K562 (cell line): ENCODE measurements at regions of chr1 and their contacts with region 1.

Region 1: DNA sequence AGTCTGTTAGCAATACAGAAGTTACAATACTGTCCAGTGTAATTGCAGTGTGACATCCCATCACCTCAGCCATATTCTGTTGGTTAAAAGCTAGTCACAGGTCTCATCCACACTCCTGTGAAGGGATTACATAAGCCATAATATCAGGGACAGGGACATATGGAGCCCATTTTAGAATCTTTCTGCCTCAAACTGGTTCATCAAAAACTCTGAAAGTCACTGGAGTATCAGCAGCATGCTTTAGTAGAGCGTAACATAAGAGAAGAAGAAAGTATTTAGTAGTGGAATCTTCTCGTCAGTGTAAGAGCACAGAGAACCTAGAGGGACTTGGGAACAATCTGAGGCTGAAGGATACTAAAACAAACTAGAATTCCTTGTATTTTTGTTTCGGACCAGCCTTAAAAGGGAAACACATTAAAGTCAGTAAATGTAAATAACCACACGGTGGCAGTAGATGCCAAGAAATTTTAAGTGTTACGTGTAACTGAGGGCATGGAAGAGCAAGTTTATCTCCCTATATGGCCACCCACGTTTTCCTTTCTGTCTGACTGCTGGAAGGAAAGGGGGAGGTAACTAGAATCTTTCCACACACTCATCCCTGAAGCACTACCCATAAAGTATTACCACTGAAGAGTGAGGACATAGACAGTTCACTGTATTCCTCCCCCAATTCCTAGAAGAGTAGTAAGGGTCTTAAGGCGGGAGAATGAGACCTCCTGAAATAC is 41.6 kb upstream of the AGL start:
- DNase-seq: peak; percentile 74 to 93 (median 82)
- ATAC-seq: peak; percentile 95
- H3K4me3 ChIP-seq: no peak overlapping the region
- H3K27ac ChIP-seq: peak overlapping the region; percentile 69
- H3K4me1 ChIP-seq: peaks cover 0 to 11% of the 10 kb centered on the region in 2 experiments; a peak in 2 of 5 replicates
- H3K27me3 ChIP-seq: no peaks in the 10 kb centered on the region
- CTCF ChIP-seq: peak; percentile 54 to 84 (median 70)
- EP300 ChIP-seq: peak; percentile 52
- POLR2A ChIP-seq: no peak
- RAD21 ChIP-seq: peak; percentile 94 to 95

Region 2: DNA sequence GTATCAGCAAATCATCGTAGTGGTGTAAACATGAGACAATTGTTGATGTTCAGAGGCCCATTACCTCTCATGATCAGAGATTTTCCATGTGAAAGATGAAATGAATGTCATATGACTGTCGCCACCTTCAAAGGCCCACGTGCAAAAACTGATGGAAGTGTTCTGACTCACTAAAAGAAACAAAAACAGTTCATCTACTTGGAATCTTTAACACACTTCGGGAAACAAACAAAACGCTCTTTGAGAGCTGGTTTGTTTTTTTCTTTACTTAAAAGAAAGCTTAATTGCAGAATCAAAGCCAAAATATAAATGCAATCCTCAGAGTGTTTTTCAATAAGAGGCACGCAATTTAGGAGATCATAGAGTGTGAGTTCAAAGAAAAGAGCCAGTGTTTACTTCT is 443.4 kb before region 1 on chr1:
- CTCF ChIA-PET with region 1: no interaction called
- POLR2A ChIA-PET with region 1: no interaction called
- in situ Hi-C with region 1: no loop called
- intact Hi-C with region 1: no loop called
- DNase-seq: no peak
- ATAC-seq: no peak
- H3K4me3 ChIP-seq: no peak overlapping the region
- H3K27ac ChIP-seq: no peak overlapping the region
- H3K4me1 ChIP-seq: no peaks in the 10 kb centered on the region
- H3K27me3 ChIP-seq: no peaks in the 10 kb centered on the region
- CTCF ChIP-seq: no peak
- EP300 ChIP-seq: no peak
- POLR2A ChIP-seq: no peak
- RAD21 ChIP-seq: no peak

Region 3: GRCh38 chr1:99737016-99737415 is 71.5 kb before region 1 on chr1:
- CTCF ChIA-PET with region 1: no interaction called
- POLR2A ChIA-PET with region 1: no interaction called
- in situ Hi-C with region 1: no loop called
- intact Hi-C with region 1: no loop called
- DNase-seq: peak; percentile 17 to 55 (median 37)
- ATAC-seq: peak; percentile 94
- H3K4me3 ChIP-seq: no peak overlapping the region
- H3K27ac ChIP-seq: no peak overlapping the region
- H3K4me1 ChIP-seq: no peaks in the 10 kb centered on the region
- H3K27me3 ChIP-seq: no peaks in the 10 kb centered on the region
- CTCF ChIP-seq: peak; percentile 20 to 46 (median 32); a peak in 3 of 6 replicates
- EP300 ChIP-seq: no peak
- POLR2A ChIP-seq: no peak
- RAD21 ChIP-seq: peak in 1 of 2 experiments; percentile 61; a peak in 2 of 4 replicates

Region 4: GRCh38 chr1:99771513-99771918 is 37.0 kb before region 1 on chr1:
- CTCF ChIA-PET with region 1: no interaction called
- POLR2A ChIA-PET with region 1: no interaction called
- in situ Hi-C with region 1: no loop called
- intact Hi-C with region 1: loop called (anchors 5 kb)
- DNase-seq: peak; percentile 38 to 87 (median 47)
- ATAC-seq: peak; percentile 28
- H3K4me3 ChIP-seq: no peak overlapping the region
- H3K27ac ChIP-seq: peak overlapping the region; percentile 70
- H3K4me1 ChIP-seq: peaks cover 20 to 46% of the 10 kb centered on the region in 2 experiments
- H3K27me3 ChIP-seq: no peaks in the 10 kb centered on the region
- CTCF ChIP-seq: no peak
- EP300 ChIP-seq: peak; percentile 95
- POLR2A ChIP-seq: no peak
- RAD21 ChIP-seq: no peak

Region 5: DNA sequence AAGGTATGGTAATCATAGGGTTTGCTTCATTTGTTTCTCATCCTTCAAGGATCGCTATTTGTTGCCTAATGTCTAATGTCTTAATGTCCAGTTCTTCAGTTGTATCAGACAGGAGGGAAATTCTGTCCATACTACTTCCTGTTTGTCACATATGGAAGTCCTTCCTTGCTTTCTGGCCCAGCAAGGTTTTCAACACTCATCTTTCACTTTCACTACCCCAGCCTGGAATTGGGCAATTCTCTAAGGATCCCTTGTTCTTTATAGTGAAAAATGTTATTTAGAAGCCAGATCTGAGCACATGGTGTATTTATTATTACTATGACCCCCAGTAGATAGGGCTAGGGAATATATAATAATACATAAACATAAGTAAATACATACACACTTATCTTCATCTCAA is 110.7 kb after region 1 on chr1:
- CTCF ChIA-PET with region 1: no interaction called
- POLR2A ChIA-PET with region 1: no interaction called
- in situ Hi-C with region 1: no loop called
- intact Hi-C with region 1: no loop called
- DNase-seq: no peak
- ATAC-seq: no peak
- H3K4me3 ChIP-seq: no peak overlapping the region
- H3K27ac ChIP-seq: no peak overlapping the region
- H3K4me1 ChIP-seq: no peaks in the 10 kb centered on the region
- H3K27me3 ChIP-seq: no peaks in the 10 kb centered on the region
- CTCF ChIP-seq: no peak
- EP300 ChIP-seq: no peak
- POLR2A ChIP-seq: no peak
- RAD21 ChIP-seq: no peak

Region 6: GRCh38 chr1:99956755-99957154 is 148.2 kb after region 1 on chr1:
- CTCF ChIA-PET with region 1: no interaction called
- POLR2A ChIA-PET with region 1: no interaction called
- in situ Hi-C with region 1: no loop called
- intact Hi-C with region 1: loop called (anchors 5 kb)
- DNase-seq: no peak
- ATAC-seq: 0 out of 3 replicates have a peak, but pooled peaks have one; percentile 44
- H3K4me3 ChIP-seq: no peak overlapping the region
- H3K27ac ChIP-seq: no peak overlapping the region
- H3K4me1 ChIP-seq: peaks cover 6% of the 10 kb centered on the region in 2 experiments; a peak in 2 of 5 replicates
- H3K27me3 ChIP-seq: no peaks in the 10 kb centered on the region
- CTCF ChIP-seq: peak in 1 of 3 experiments; percentile 17; a peak in 1 of 6 replicates
- EP300 ChIP-seq: no peak
- POLR2A ChIP-seq: no peak
- RAD21 ChIP-seq: no peak